GM12878 (cell line): ENCODE measurements at regions of chr16 and their contacts with region 1.

Region 1: GRCh38 chr16:78770353-78771091 is 671.1 kb downstream of the WWOX start:
- DNase-seq: no peak
- ATAC-seq: peak; percentile 95
- H3K4me3 ChIP-seq: no peak overlapping the region
- H3K27ac ChIP-seq: no peak overlapping the region
- H3K4me1 ChIP-seq: peaks cover 11% of the 10 kb centered on the region
- H3K27me3 ChIP-seq: no peaks in the 10 kb centered on the region
- CTCF ChIP-seq: peak; percentile 78 to 95 (median 80)
- EP300 ChIP-seq: no peak
- POLR2A ChIP-seq: no peak
- RAD21 ChIP-seq: peak; percentile 86

Region 2: DNA sequence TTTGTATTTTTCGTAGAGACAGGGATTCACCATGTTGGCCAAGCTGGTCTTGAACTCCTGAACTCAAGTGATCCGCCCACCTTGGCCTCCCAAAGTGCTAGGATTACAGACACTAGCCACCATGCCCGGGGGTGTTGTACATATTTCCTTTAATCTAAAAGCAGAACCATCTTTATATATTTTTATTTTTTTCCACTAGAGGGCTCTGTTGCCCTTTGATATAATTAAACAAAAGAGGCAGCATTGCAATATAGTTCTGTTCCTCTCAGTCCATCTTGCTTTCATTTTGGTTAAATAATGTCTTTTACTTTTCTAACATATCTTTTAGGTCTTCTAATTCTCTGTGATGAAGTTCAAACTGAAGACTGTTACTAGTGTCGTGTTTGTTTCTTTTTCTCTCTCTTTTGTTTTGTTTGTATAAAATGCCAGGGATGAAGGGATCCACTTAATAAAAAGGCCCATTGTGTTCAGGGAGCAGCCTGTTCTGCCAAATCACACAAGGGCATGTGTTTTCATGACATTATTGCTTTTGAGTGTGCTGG is 647.7 kb before region 1 on chr16:
- CTCF ChIA-PET with region 1: no interaction called
- POLR2A ChIA-PET with region 1: no interaction called
- RAD21 ChIA-PET with region 1: no interaction called
- SMC1A ChIA-PET with region 1: no interaction called
- in situ Hi-C with region 1: loop called (anchors 10 kb)
- intact Hi-C with region 1: loop called (anchors 2 kb)
- DNase-seq: no peak
- ATAC-seq: peak; percentile 95
- H3K4me3 ChIP-seq: no peak overlapping the region
- H3K27ac ChIP-seq: no peak overlapping the region
- H3K4me1 ChIP-seq: no peaks in the 10 kb centered on the region; the same call in 1 of the 2 replicates
- H3K27me3 ChIP-seq: no peaks in the 10 kb centered on the region
- CTCF ChIP-seq: peak; percentile 8 to 51 (median 23); a peak in 3 of 6 replicates
- EP300 ChIP-seq: no peak
- POLR2A ChIP-seq: no peak
- RAD21 ChIP-seq: peak; percentile 52

Region 3: GRCh38 chr16:78235168-78235800 is 535.2 kb before region 1 on chr16:
- CTCF ChIA-PET with region 1: no interaction called
- POLR2A ChIA-PET with region 1: no interaction called
- RAD21 ChIA-PET with region 1: no interaction called
- SMC1A ChIA-PET with region 1: no interaction called
- in situ Hi-C with region 1: no loop called
- intact Hi-C with region 1: loop called (anchors 1 kb)
- DNase-seq: peak; percentile 7
- ATAC-seq: peak; percentile 97
- H3K4me3 ChIP-seq: no peak overlapping the region
- H3K27ac ChIP-seq: no peak overlapping the region
- H3K4me1 ChIP-seq: no peaks in the 10 kb centered on the region
- H3K27me3 ChIP-seq: no peaks in the 10 kb centered on the region
- CTCF ChIP-seq: peak; percentile 79 to 96 (median 93)
- EP300 ChIP-seq: no peak
- POLR2A ChIP-seq: no peak
- RAD21 ChIP-seq: peak; percentile 66

Region 4: DNA sequence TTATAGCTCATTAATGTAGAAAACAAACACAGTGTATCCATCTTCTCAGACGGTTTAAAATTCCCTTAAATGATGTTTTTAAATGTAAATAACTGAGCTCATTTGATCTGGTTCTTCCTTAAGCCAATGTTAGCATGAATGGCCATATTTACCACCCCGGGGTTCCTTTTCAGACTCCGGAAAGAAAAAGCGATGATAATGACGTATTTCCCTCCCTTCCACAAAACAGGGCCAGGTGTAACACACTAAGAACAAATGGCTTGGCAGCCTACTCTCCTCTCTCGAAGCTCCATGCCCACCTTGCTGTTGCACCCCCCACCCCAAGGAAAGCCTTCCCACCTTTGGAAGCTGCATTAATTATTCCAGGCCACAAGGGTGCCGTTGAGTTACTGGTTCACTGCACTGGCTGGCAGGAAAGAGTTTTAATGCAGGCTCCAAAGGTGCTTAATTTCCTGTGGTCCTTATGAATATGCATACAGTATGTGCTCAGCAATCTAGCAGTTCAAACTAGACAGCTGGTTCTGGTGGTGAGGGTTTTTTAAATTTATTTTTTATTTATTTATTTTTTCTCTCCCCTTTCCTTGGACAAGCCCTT is 292.2 kb before region 1 on chr16:
- CTCF ChIA-PET with region 1: interaction called, 13 read pairs
- POLR2A ChIA-PET with region 1: no interaction called
- RAD21 ChIA-PET with region 1: no interaction called
- SMC1A ChIA-PET with region 1: no interaction called
- in situ Hi-C with region 1: no loop called
- intact Hi-C with region 1: no loop called
- DNase-seq: no peak
- ATAC-seq: peak; percentile 39
- H3K4me3 ChIP-seq: no peak overlapping the region
- H3K27ac ChIP-seq: no peak overlapping the region
- H3K4me1 ChIP-seq: peaks cover 7% of the 10 kb centered on the region
- H3K27me3 ChIP-seq: no peaks in the 10 kb centered on the region
- CTCF ChIP-seq: peak; percentile 28 to 50 (median 35); a peak in 3 of 6 replicates
- EP300 ChIP-seq: no peak
- POLR2A ChIP-seq: no peak
- RAD21 ChIP-seq: peak; percentile 34

Region 5: DNA sequence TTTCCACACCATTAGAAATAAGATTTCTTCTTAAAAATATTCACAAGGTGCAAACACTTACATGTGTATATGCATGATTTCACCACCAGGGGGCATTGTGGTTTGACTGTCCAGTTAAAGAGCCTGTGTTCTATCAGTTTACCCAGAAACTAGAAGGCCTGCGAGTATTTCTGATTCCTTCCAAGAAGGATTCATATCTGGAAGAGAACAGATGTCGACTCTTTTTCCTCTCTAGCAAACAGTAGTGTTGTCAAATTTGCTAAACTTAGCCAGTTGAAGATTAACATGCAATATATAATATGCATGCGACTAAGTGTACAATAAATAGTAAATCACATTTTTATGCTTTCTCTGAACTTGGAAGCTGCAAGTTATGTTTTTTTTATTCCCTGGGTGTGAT is 266.9 kb before region 1 on chr16:
- CTCF ChIA-PET with region 1: interaction called, 36 read pairs
- POLR2A ChIA-PET with region 1: no interaction called
- RAD21 ChIA-PET with region 1: interaction called, 8 read pairs
- SMC1A ChIA-PET with region 1: interaction called, 11 read pairs
- in situ Hi-C with region 1: loop called (anchors 5 kb)
- intact Hi-C with region 1: loop called (anchors 1 kb)
- DNase-seq: no peak
- ATAC-seq: peak; percentile 55; the same call in 2 of the 3 replicates
- H3K4me3 ChIP-seq: no peak overlapping the region
- H3K27ac ChIP-seq: no peak overlapping the region
- H3K4me1 ChIP-seq: peaks cover 3% of the 10 kb centered on the region
- H3K27me3 ChIP-seq: no peaks in the 10 kb centered on the region
- CTCF ChIP-seq: peak; percentile 59 to 68 (median 64); a peak in 5 of 6 replicates
- EP300 ChIP-seq: no peak
- POLR2A ChIP-seq: no peak
- RAD21 ChIP-seq: peak; percentile 71

Region 6: GRCh38 chr16:78563905-78564304 is 206.6 kb before region 1 on chr16:
- CTCF ChIA-PET with region 1: no interaction called
- POLR2A ChIA-PET with region 1: no interaction called
- RAD21 ChIA-PET with region 1: no interaction called
- SMC1A ChIA-PET with region 1: no interaction called
- in situ Hi-C with region 1: no loop called
- intact Hi-C with region 1: no loop called
- DNase-seq: no peak
- ATAC-seq: peak; percentile 41; the same call in 2 of the 3 replicates
- H3K4me3 ChIP-seq: no peak overlapping the region
- H3K27ac ChIP-seq: no peak overlapping the region
- H3K4me1 ChIP-seq: no peaks in the 10 kb centered on the region
- H3K27me3 ChIP-seq: no peaks in the 10 kb centered on the region
- CTCF ChIP-seq: no peak
- EP300 ChIP-seq: no peak
- POLR2A ChIP-seq: no peak
- RAD21 ChIP-seq: no peak

Region 7: DNA sequence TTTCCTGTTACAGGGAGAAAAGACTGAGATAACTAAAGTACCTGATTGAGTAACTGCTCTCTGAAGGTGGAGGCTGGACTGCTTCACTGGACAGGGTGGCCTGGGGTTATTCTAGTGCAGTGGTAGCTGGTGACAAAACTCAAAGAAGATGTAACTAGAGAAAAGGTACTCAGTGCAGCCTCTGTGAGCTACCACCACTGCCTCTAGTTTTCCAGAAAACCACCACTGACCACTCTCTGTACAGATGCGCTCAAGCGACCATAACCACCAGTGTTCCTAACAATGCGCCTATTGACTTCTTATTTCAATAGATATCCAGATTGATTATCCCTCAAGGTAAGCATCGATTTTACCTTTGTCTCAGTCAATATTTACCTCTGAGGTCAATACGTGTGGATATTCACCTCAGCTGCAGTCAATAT is 178.8 kb before region 1 on chr16:
- CTCF ChIA-PET with region 1: no interaction called
- POLR2A ChIA-PET with region 1: no interaction called
- RAD21 ChIA-PET with region 1: no interaction called
- SMC1A ChIA-PET with region 1: no interaction called
- in situ Hi-C with region 1: no loop called
- intact Hi-C with region 1: no loop called
- DNase-seq: no peak
- ATAC-seq: no peak
- H3K4me3 ChIP-seq: no peak overlapping the region
- H3K27ac ChIP-seq: no peak overlapping the region
- H3K4me1 ChIP-seq: no peaks in the 10 kb centered on the region
- H3K27me3 ChIP-seq: no peaks in the 10 kb centered on the region
- CTCF ChIP-seq: no peak
- EP300 ChIP-seq: no peak
- POLR2A ChIP-seq: no peak
- RAD21 ChIP-seq: no peak

Region 8: DNA sequence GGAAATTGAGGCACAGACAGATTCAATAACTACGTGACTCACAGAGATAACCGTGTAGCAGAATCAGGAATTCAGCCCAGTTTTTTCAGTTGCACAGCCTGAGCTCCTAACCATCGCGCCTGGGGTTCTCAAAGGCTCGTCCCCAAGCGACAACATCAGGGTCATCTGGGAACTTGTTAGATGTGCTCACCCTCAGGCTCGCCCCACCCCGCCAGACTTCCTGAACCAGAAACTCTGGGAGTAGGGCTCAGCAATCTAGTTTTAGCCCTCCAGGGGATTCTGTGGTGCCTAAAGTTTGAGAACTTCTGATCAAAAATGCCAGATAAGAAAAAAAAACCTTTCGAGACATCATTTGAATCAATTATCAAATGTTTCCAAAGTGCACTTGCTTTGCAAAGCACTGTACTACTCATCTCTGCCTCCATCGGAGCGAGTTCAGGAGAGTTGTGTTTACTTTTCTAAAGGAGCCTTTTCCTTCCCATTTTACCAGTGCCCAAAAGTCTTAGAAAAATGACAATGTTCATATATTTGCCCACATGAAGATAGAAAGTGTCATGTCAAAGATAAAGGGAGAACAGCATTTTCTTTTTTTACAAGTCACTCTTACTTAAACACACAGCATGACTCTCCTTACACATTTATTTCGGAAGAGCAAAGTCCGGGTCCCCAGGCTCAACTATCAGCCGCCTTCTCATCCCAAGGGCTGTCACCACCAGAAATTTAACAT is 111.1 kb before region 1 on chr16:
- CTCF ChIA-PET with region 1: no interaction called
- POLR2A ChIA-PET with region 1: no interaction called
- RAD21 ChIA-PET with region 1: no interaction called
- SMC1A ChIA-PET with region 1: no interaction called
- in situ Hi-C with region 1: no loop called
- intact Hi-C with region 1: no loop called
- DNase-seq: no peak
- ATAC-seq: no peak
- H3K4me3 ChIP-seq: no peak overlapping the region
- H3K27ac ChIP-seq: no peak overlapping the region
- H3K4me1 ChIP-seq: no peaks in the 10 kb centered on the region
- H3K27me3 ChIP-seq: no peaks in the 10 kb centered on the region
- CTCF ChIP-seq: no peak
- EP300 ChIP-seq: no peak
- POLR2A ChIP-seq: no peak
- RAD21 ChIP-seq: no peak

Region 9: DNA sequence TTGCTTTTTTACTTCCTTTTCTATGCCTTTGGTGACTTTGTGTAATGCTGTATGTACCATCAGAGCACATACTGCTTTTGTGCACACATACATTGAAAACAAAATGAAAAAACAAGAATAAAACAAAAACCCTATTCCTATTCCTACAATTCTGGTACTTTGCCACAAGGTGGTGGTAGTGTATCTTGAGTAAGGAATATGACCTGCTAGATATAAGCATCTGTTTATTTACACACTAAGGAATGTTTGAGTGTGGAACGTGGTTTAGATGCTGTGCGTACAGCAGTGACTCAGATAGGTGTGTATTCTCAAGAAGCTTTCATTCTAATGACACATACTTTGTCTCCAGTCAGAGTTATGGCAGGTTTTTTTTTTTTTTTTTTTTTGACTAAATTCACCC is 64.8 kb before region 1 on chr16:
- CTCF ChIA-PET with region 1: interaction called, 87 read pairs
- POLR2A ChIA-PET with region 1: interaction called, 3 read pairs
- RAD21 ChIA-PET with region 1: interaction called, 37 read pairs
- SMC1A ChIA-PET with region 1: interaction called, 28 read pairs
- in situ Hi-C with region 1: loop called (anchors 5 kb)
- intact Hi-C with region 1: loop called (anchors 2 kb)
- DNase-seq: peak; percentile 9
- ATAC-seq: peak; percentile 61
- H3K4me3 ChIP-seq: no peak overlapping the region
- H3K27ac ChIP-seq: no peak overlapping the region
- H3K4me1 ChIP-seq: no peaks in the 10 kb centered on the region
- H3K27me3 ChIP-seq: no peaks in the 10 kb centered on the region
- CTCF ChIP-seq: peak; percentile 51 to 58 (median 51); a peak in 4 of 6 replicates
- EP300 ChIP-seq: no peak
- POLR2A ChIP-seq: no peak
- RAD21 ChIP-seq: peak; percentile 88

Region 10: GRCh38 chr16:78749745-78750268 is 20.7 kb before region 1 on chr16:
- CTCF ChIA-PET with region 1: interaction called, 6 read pairs
- POLR2A ChIA-PET with region 1: interaction called, 3 read pairs
- RAD21 ChIA-PET with region 1: interaction called, 4 read pairs
- SMC1A ChIA-PET with region 1: interaction called, 14 read pairs
- in situ Hi-C with region 1: no loop called
- intact Hi-C with region 1: no loop called
- DNase-seq: peak; percentile 41
- ATAC-seq: peak; percentile 91
- H3K4me3 ChIP-seq: 0 out of 2 replicates have a peak overlapping the region, but pooled peaks have one; percentile 15
- H3K27ac ChIP-seq: peak overlapping the region; percentile 49
- H3K4me1 ChIP-seq: peaks cover 6% of the 10 kb centered on the region
- H3K27me3 ChIP-seq: no peaks in the 10 kb centered on the region
- CTCF ChIP-seq: no peak
- EP300 ChIP-seq: peak in 1 of 2 experiments; percentile 47; a peak in 1 of 4 replicates
- POLR2A ChIP-seq: no peak
- RAD21 ChIP-seq: no peak

Region 11: GRCh38 chr16:78823027-78823426 is 52.5 kb after region 1 on chr16:
- CTCF ChIA-PET with region 1: no interaction called
- POLR2A ChIA-PET with region 1: no interaction called
- RAD21 ChIA-PET with region 1: no interaction called
- SMC1A ChIA-PET with region 1: no interaction called
- in situ Hi-C with region 1: no loop called
- intact Hi-C with region 1: no loop called
- DNase-seq: no peak
- ATAC-seq: no peak
- H3K4me3 ChIP-seq: no peak overlapping the region
- H3K27ac ChIP-seq: no peak overlapping the region
- H3K4me1 ChIP-seq: no peaks in the 10 kb centered on the region
- H3K27me3 ChIP-seq: no peaks in the 10 kb centered on the region
- CTCF ChIP-seq: no peak
- EP300 ChIP-seq: no peak
- POLR2A ChIP-seq: no peak
- RAD21 ChIP-seq: no peak